ENCODE measurements at regions of chr2 and their contacts with region 1.

Region 1: DNA sequence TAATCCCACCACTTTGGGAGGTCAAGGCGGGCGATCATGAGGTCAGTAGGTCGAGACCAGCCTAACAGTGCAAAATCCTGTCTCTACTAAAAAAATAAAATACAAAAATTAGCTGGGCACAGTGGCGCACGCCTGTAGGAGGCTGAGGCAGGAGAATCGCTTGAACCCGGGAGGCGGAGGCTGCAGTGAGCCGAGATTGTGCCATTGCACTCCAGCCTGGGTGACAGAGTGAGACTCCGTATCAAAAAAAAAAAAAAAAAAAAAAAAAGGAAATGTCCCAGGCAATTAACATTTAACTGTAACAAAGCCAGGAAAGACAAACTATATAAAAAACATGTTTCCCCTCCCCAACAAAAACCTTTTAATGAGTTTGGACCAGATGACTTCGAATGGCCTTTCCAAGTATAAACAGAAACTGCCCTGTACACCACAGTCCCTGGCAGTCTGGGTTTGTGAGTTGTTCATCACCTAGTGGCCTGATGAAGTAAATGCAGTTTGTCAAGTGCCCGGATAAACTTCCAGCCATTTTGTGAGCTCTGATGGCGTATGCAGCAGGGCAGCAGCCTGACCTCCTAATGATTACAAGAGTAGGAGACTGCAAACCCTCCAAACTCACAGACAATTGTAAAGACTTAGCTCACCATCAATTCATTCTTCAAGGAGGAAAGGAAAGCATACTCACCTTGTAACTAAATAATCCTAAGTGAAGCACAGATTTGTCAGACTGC is 16.6 kb upstream of the PCBP1 start:
- DNase-seq: peak; percentile 58 to 70
- ATAC-seq: peak; percentile 76

Region 2: DNA sequence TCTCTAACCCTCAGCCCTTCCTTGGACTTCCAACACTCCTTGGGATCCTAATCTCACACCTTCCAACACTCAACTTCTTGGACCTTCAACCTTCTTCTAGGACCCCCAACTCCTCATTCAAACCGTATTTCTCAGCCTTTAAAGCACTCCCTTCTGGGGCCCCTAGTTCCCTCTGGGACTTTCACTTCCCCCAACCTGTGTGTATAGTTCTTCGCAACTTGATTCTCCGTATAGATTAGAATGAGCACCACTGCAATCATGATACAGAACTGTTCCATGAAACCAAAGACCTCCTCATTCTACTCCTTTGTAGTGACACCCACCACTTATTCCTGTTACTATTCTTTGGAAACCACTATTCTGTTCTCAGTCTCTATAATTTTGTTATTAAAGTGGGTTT is 571.5 kb before region 1 on chr2:
- intact Hi-C with region 1: no loop called
- DNase-seq: no peak
- ATAC-seq: peak; percentile 11

Region 3: GRCh38 chr2:69914170-69914960 is 156.3 kb before region 1 on chr2:
- intact Hi-C with region 1: loop called in 1 of 2 experiments (anchors 5 kb)
- DNase-seq: peak in 1 of 2 donors; percentile 100
- ATAC-seq: peak; percentile 81

Region 4: DNA sequence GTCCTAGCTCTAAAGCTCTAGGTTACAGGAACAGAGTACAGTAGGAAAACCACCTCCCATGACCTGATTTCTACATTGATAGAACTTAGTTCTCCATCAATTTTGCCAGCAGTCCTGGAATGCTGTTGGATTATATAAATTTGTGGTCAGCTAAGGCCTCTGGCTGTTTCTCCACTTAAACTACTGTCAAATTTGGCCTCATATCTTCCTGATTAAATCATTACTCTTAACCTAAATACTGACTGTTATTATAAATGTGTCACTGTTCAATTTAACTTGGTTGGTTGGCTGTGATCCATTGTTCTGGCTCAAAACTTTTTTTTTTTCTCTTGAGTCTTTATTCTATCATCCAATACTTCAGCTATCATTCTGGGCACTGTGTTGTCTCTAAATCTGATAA is 411.7 kb after region 1 on chr2:
- intact Hi-C with region 1: no loop called
- DNase-seq: no peak
- ATAC-seq: no peak

Measured in left colon (tissue), 2 donors.